T-cell (primary cell): ENCODE measurements at regions of chr13 and their contacts with region 1.

Region 1: DNA sequence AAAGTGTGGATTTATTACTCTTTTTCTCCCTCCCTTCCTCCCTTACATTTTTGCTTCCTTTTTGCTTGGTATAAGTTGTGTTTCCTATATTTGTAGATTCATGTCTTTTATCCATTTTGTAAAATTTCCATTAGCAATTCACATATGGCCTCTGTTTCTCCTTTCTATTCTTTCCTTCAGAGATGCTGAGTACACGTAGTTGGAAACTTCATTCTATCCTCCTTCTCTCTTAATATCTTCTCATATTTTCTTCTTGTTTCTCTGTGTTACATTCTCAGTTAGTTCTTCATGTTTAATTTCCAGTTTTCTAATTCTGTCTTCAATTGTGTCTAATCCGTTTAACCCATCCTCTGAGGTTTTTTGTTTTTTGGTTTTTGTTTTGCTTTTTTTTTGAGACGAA is 188.9 kb downstream of the ZIC5 start:
- DNase-seq: no peak
- ATAC-seq: no peak
- H3K4me3 ChIP-seq: no peak overlapping the region
- H3K4me3 Mint-ChIP-seq: no peak overlapping the region
- H3K27ac ChIP-seq: no peak overlapping the region
- H3K27ac Mint-ChIP-seq: no peak overlapping the region
- H3K4me1 ChIP-seq: no peaks in the 10 kb centered on the region
- H3K4me1 Mint-ChIP-seq: no peaks in the 10 kb centered on the region
- H3K27me3 ChIP-seq: no peaks in the 10 kb centered on the region
- H3K27me3 Mint-ChIP-seq: no peaks in the 10 kb centered on the region

Region 2: GRCh38 chr13:99796175-99796819 is 13.6 kb after region 1 on chr13:
- CTCF ChIA-PET with region 1: interaction called in 1 of 2 experiments, 18 read pairs
- POLR2A ChIA-PET with region 1: no interaction called
- DNase-seq: peak in 5 of 35 experiments; percentile 2 to 31 (median 11)
- ATAC-seq: no peak
- H3K4me3 ChIP-seq: no peak overlapping the region
- H3K4me3 Mint-ChIP-seq: no peak overlapping the region
- H3K27ac ChIP-seq: no peak overlapping the region
- H3K27ac Mint-ChIP-seq: no peak overlapping the region
- H3K4me1 ChIP-seq: no peaks in the 10 kb centered on the region
- H3K4me1 Mint-ChIP-seq: no peaks in the 10 kb centered on the region
- H3K27me3 ChIP-seq: no peaks in the 10 kb centered on the region
- H3K27me3 Mint-ChIP-seq: no peaks in the 10 kb centered on the region